ENCODE measurements at regions of chr17 and their contacts with region 1.

Region 1: DNA sequence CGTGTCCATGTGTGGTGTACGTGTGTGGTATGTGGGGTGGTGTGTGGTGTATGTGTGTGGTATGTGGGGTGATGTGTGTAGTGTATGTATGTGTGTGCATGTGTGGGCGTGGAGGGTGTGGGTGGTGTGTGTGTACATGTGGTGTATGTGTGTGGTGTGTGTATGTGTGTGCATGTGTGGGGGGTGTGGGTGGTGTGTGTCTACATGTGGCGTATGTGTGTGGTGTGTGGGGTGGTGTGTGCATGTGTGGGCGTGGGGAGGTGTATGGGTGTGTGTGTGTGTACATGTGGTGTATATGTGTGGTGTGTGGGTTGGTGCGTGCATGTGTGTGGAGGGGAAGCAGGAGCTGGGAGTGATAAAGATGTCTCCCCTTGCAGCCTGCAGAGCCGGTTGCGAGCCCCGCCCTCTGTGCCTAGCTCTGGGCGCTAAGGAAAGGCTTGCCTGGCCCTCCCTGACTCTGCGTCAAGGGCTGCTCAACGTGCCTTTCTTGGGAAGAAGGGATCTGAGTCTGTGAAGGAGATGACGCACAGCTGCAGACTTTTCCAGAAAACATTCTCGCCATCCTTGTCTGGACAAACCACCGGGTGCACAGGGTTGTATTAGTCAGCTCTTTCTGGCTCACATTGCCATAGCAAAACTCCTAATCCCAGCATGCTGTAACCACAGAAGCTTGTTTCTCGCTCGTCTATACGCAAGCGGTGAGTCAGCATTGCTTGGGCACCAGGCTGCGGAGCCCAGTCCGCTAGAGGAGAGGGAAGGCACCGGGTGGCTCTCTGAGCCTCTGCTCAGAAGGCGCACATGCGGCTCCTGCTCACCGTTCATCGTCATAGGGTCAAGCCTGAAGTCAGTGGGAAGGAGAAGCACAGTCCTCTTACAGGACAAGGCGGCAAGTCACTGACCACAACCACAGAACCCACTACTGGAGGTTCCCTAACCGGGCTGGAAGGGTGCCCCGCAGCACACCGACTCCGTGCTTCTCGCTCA is 2.0 kb upstream of the CD300H start:
- DNase-seq: no peak
- H3K4me3 ChIP-seq: no peak overlapping the region
- H3K4me3 Mint-ChIP-seq: no peak overlapping the region
- H3K27ac Mint-ChIP-seq: no peak overlapping the region
- H3K4me1 ChIP-seq: no peaks in the 10 kb centered on the region
- H3K4me1 Mint-ChIP-seq: peaks cover 6% of the 10 kb centered on the region
- H3K27me3 ChIP-seq: no peaks in the 10 kb centered on the region; the same call in none of the 2 replicates
- H3K27me3 Mint-ChIP-seq: peaks cover 24% of the 10 kb centered on the region
- CTCF ChIP-seq: no peak

Region 2: DNA sequence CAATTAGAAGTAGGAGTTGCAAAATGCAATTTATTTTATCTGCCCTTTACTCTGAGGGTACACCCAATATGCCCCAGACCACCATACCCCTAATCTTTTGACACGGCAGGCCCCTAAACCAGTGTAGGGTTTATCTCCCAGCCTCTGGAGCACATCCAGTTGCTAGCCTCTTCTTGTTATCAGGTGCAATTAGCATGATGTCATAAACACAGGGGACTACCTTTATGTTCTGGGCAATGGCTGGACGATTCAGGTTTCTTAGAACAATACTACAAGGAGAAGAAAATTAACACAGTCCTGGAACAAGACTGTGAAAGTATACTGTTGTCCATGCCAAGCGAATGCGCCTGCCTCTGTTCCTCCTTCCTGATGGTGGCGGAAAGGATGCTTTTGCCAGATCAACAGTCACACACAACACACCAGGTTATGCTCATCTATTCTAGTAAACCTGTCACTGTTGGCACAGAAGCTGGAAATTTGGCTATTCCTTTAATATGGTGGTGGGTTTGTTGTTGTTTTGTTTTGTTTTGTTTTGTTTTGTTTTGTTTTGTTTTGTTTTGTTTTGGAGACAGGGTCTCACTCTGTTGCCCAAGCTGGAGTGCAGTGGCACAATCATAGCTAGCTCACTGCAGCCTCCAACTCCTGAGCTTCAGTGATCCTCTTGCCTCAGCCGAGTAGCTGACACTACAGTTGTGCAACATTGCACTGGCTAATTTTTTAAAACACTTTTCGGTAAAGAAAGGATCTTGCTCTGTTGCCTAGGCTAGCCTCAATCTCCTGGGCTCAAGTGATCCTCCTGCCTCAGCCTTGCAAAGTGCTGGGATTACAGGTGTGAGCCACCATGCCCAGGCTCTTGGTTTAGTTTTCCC is 25.8 kb after region 1 on chr17:
- CTCF ChIA-PET with region 1: no interaction called
- POLR2A ChIA-PET with region 1: no interaction called
- intact Hi-C with region 1: no loop called
- DNase-seq: no peak
- H3K4me3 ChIP-seq: no peak overlapping the region
- H3K4me3 Mint-ChIP-seq: no peak overlapping the region
- H3K27ac Mint-ChIP-seq: no peak overlapping the region
- H3K4me1 ChIP-seq: no peaks in the 10 kb centered on the region
- H3K4me1 Mint-ChIP-seq: no peaks in the 10 kb centered on the region
- H3K27me3 ChIP-seq: no peaks in the 10 kb centered on the region; the same call in 1 of the 2 replicates
- H3K27me3 Mint-ChIP-seq: peaks cover 38% of the 10 kb centered on the region
- CTCF ChIP-seq: no peak

Region 3: GRCh38 chr17:74712756-74713155 is 143.4 kb after region 1 on chr17 and contains the start of gene CD300LF:
- CTCF ChIA-PET with region 1: no interaction called
- POLR2A ChIA-PET with region 1: interaction called, 16 read pairs
- intact Hi-C with region 1: no loop called
- DNase-seq: no peak
- H3K4me3 ChIP-seq: no peak within 1 kb of the TSS
- H3K4me3 Mint-ChIP-seq: no peak within 1 kb of the TSS
- H3K27ac Mint-ChIP-seq: peak within 1 kb of the TSS; percentile 56
- H3K4me1 ChIP-seq: peaks cover 29% of the 10 kb centered on the region
- H3K4me1 Mint-ChIP-seq: peaks cover 17% of the 10 kb centered on the region
- H3K27me3 ChIP-seq: no peaks in the 10 kb centered on the region
- H3K27me3 Mint-ChIP-seq: no peaks in the 10 kb centered on the region
- CTCF ChIP-seq: no peak
- total RNA-seq, gene CD300LF: 2.2 and 2.4 TPM in 2 replicates